Tibial artery (tissue), 4 donors: ENCODE measurements at regions of chr3 and their contacts with region 1.

Region 1: DNA sequence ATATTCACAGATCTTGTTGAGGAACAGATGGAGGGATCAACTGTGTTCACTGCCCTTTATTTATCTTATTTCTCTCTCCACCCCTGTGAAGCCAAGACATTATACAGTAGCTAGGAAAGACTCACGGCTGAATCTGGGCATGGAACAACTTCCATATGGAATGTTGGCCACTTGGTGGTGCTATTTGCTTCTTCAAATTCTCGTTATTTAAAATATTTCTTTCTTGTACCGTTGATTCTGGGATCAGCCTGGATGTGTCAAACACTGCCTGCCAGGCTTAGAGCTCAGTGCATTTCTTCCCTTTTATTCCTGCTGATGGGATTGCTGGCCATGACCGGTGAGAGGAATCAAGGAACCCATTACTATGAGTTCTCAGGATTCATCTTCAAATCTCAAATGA is 17.5 kb upstream of the GASK1A start:
- DNase-seq: peak in 1 of 2 donors; percentile 29
- H3K4me3 ChIP-seq: no peak overlapping the region
- H3K27ac ChIP-seq: no peak overlapping the region
- H3K4me1 ChIP-seq: peaks cover 0 to 5% (median 0%) of the 10 kb centered on the region in 4 donors
- H3K27me3 ChIP-seq: no peaks in the 10 kb centered on the region
- CTCF ChIP-seq: peak; percentile 72 to 74

Region 2: GRCh38 chr3:43031485-43031884 is 69.9 kb after region 1 on chr3:
- intact Hi-C with region 1: loop called (anchors 10 kb)
- DNase-seq: peak; percentile 48 to 89
- H3K4me3 ChIP-seq: no peak overlapping the region
- H3K27ac ChIP-seq: no peak overlapping the region
- H3K4me1 ChIP-seq: peaks cover 0 to 23% (median 5%) of the 10 kb centered on the region in 4 donors
- H3K27me3 ChIP-seq: no peaks in the 10 kb centered on the region
- CTCF ChIP-seq: no peak

Region 3: GRCh38 chr3:43062564-43063040 is 101.0 kb after region 1 on chr3:
- intact Hi-C with region 1: no loop called
- DNase-seq: no peak
- H3K4me3 ChIP-seq: no peak overlapping the region
- H3K27ac ChIP-seq: no peak overlapping the region
- H3K4me1 ChIP-seq: peaks cover 0 to 6% (median 0%) of the 10 kb centered on the region in 4 donors
- H3K27me3 ChIP-seq: no peaks in the 10 kb centered on the region
- CTCF ChIP-seq: no peak

Region 4: GRCh38 chr3:43155464-43156121 is 194.0 kb after region 1 on chr3:
- intact Hi-C with region 1: loop called (anchors 5 kb)
- DNase-seq: peak; percentile 73 to 85
- H3K4me3 ChIP-seq: no peak overlapping the region
- H3K27ac ChIP-seq: no peak overlapping the region
- H3K4me1 ChIP-seq: peaks cover 0 to 16% (median 8%) of the 10 kb centered on the region in 4 donors
- H3K27me3 ChIP-seq: no peaks in the 10 kb centered on the region
- CTCF ChIP-seq: peak; percentile 65 to 66